Activated CD4-positive, alpha-beta T cell treated with anti-CD3 and anti-CD28 coated beads, Interleukin-2, amount 10 ng/mL, durations not matched to agents 7 days and 5 days (primary cell): ENCODE measurements at regions of chr5 and their contacts with region 1.

Region 1: DNA sequence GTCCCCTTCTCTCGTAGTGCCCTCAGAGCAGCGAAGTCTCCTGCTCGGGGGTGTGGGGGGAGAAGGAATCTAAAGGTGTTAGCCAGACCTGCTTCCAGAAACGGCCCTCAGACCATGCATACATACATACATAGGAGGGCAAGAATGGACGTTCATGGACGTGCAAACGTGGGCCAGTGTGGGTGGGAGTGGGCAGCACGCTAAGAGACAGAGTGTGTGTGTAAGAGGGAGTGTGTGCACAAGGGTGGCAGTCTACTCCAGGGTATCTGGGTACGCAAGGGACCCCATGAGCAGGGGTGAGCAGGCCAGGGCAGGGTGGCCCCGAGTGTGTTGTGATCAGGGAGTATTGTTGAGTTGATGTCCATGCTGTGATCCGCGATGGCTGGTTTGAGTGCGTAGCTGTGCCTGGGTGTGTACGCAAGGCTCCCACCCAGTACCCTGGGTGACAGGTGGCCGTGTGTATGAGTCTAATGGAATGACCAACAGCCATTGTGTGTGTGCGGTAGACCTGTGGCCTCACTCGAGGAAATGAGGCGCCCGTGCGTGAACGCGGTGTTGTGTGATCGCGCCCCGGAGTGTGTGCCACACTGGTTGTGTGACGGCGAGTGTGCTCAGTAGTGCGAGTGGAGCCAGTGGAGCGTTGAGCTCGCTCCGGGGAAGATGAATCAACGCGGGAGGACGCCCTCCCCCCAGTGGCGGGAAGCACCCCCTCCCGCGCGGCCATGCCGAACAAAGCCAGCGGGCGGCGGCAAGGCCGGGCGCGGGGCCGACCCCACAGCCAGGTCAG is 826 bp downstream of the GPRIN1 start:
- DNase-seq: no peak
- H3K4me3 Mint-ChIP-seq: peak overlapping the region; percentile 87
- H3K27ac Mint-ChIP-seq: peak overlapping the region; percentile 68
- H3K4me1 Mint-ChIP-seq: peaks cover 19% of the 10 kb centered on the region
- H3K27me3 Mint-ChIP-seq: peaks cover 37% of the 10 kb centered on the region

Region 2: DNA sequence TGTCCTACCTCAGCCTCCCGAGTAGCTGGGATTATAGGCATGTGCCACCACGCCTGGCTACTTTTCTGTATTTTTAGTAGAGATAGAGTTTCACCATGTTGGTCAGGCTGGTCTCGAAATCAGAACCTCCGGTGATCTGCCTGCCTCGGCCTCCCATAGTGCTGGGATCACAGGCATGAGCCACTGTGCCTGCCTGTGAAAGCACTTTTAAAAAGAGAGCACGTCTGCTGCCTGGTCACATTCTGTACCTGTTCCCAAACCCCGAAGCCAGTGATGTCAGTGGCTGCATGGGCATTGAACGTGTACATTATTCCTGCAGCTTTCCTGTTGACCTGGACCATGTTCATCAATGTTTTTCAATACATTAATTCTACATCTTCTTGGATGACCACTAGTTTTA is 406.0 kb before region 1 on chr5:
- CTCF ChIA-PET with region 1: no interaction called
- POLR2A ChIA-PET with region 1: no interaction called
- DNase-seq: no peak
- H3K4me3 Mint-ChIP-seq: no peak overlapping the region
- H3K27ac Mint-ChIP-seq: no peak overlapping the region
- H3K4me1 Mint-ChIP-seq: peaks cover 4% of the 10 kb centered on the region
- H3K27me3 Mint-ChIP-seq: peaks cover 21% of the 10 kb centered on the region

Region 3: DNA sequence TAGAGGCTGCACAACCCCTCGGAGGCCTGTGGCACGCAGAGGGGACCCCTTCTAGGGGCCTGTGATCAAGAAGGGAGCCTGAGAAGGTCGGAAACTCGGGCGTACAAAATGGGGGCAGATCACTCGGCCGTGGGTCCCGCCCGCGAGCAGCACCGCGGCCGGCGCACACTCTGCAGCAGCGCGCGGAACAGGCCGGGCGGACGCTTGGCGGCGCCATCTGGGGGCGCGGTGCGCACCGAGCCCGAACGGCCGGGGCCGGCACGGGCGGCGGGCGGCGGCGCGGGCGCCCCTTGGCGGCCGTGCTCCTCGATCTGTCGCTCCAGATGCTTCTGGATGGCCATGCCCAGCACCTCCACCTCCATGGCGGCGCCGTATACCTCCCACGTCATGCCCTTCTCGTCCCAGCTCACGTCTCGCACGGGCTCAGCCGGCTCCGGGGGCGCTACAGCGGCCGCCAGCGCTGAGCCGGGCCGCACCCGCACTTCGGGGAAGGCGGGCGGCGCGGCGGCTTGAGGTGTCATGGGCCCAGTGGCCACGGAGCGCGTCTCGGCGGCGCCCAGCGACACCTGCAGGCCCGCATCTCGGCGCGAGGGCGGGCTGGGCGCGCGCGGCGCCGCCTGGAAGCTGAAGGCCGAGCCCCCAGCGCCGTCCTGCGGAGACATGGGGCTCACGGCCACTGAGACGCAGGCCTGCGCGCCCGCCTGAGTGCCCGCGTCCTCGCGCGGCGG is 12.3 kb before region 1 on chr5:
- CTCF ChIA-PET with region 1: interaction called, 19 read pairs
- POLR2A ChIA-PET with region 1: no interaction called
- DNase-seq: peak; percentile 62
- H3K4me3 Mint-ChIP-seq: peak overlapping the region; percentile 64
- H3K27ac Mint-ChIP-seq: peak overlapping the region; percentile 66
- H3K4me1 Mint-ChIP-seq: peaks cover 9% of the 10 kb centered on the region
- H3K27me3 Mint-ChIP-seq: peaks cover 2% of the 10 kb centered on the region